ENCODE measurements at regions of chr3 and their contacts with region 1.

Region 1: DNA sequence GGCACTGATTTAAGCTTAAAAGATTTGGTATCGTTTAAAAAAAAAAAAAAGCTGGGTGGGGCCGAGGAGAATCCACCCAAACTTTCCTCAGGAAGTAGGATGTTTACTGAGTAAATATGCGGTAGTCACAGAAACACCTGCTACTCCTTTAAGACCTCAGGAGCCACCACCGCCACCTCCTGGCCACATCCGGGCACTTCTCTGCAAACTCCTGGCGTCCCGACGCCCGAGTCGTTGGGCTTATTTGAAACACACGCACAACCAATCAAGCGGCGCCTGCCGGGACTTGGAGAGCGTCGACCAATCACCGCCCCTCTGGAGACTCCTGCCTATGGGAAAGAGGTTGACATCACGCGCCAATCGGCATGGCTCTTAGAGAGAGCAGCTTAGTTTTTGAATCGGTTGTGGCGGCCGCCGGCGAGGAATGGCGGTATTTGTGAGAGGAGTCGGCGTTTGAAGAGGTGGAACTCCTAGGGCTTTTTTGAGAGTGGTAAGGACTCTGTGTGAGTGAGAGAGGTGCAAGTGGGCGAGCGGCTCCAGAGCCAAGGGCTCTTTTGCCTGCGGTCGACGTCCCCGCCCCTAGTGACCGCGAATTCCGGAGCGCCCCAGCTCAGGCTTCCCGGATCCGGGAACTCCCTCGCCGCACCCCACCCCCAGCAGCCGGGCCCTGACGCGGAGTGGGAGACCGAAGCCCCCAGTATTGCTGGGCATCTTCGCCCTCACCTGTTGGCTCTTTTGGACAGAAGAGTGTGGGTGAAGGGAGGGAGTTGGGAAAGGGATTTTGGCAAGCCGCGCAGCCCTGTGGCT is at the start of gene ECT2:
- DNase-seq: peak; percentile 100
- H3K4me3 Mint-ChIP-seq: peak within 1 kb of the TSS; percentile 99
- H3K27ac Mint-ChIP-seq: peak within 1 kb of the TSS; percentile 94
- H3K4me1 Mint-ChIP-seq: peaks cover 13% of the 10 kb centered on the region
- H3K27me3 Mint-ChIP-seq: no peaks in the 10 kb centered on the region
- total RNA-seq, gene ECT2: 55.3 to 59.4 TPM

Region 2: GRCh38 chr3:170869645-170870593 is 1880.7 kb before region 1 on chr3 and contains the start of gene RPL22L1:
- CTCF ChIA-PET with region 1: no interaction called
- intact Hi-C with region 1: loop called (anchors 1 kb)
- DNase-seq: peak; percentile 95
- H3K4me3 Mint-ChIP-seq: peak within 1 kb of the TSS; percentile 94
- H3K27ac Mint-ChIP-seq: peak within 1 kb of the TSS; percentile 98
- H3K4me1 Mint-ChIP-seq: peaks cover 14% of the 10 kb centered on the region
- H3K27me3 Mint-ChIP-seq: no peaks in the 10 kb centered on the region
- total RNA-seq, gene RPL22L1: 480 to 525 TPM

Region 3: GRCh38 chr3:172039436-172040077 is 711.0 kb before region 1 on chr3 and contains the start of gene FNDC3B:
- CTCF ChIA-PET with region 1: no interaction called
- intact Hi-C with region 1: loop called (anchors 1 kb)
- DNase-seq: peak; percentile 96
- H3K4me3 Mint-ChIP-seq: peak within 1 kb of the TSS; percentile 91
- H3K27ac Mint-ChIP-seq: peak within 1 kb of the TSS; percentile 89
- H3K4me1 Mint-ChIP-seq: peaks cover 21% of the 10 kb centered on the region
- H3K27me3 Mint-ChIP-seq: no peaks in the 10 kb centered on the region
- total RNA-seq, gene FNDC3B: 9.2 to 13.5 TPM

Region 4: GRCh38 chr3:172511783-172512762 is 238.5 kb before region 1 on chr3:
- CTCF ChIA-PET with region 1: interaction called, 3 read pairs
- intact Hi-C with region 1: loop called (anchors 2 kb)
- DNase-seq: peak; percentile 92
- H3K4me3 Mint-ChIP-seq: peak overlapping the region; percentile 68
- H3K27ac Mint-ChIP-seq: peak overlapping the region; percentile 93
- H3K4me1 Mint-ChIP-seq: peaks cover 82% of the 10 kb centered on the region
- H3K27me3 Mint-ChIP-seq: no peaks in the 10 kb centered on the region

Region 5: DNA sequence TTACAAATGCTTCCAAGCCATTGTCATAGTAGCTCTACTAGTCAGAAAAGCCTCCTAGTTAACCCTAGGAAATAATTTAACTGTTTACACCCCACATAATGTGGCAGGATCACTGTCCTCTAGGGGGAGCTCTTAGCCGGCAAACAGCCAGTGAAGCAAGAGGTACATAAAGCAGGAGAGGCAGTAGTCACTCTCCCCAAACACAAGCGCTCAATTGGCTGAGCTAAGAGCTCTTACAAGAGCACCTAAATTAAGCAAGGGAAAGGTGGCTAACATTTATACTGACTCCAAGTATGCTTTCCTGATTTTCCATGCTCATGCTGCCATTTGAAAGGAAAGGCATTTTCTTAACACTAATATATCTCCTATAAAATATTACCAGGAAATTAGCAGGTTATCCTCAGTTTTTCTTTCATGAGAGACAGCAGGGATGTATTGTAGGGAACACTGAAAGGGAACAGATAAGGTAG is 77.3 kb before region 1 on chr3:
- CTCF ChIA-PET with region 1: interaction called, 9 read pairs
- intact Hi-C with region 1: loop called (anchors 1 kb)
- DNase-seq: peak; percentile 89
- H3K4me3 Mint-ChIP-seq: no peak overlapping the region
- H3K27ac Mint-ChIP-seq: no peak overlapping the region
- H3K4me1 Mint-ChIP-seq: no peaks in the 10 kb centered on the region
- H3K27me3 Mint-ChIP-seq: no peaks in the 10 kb centered on the region

Region 6: DNA sequence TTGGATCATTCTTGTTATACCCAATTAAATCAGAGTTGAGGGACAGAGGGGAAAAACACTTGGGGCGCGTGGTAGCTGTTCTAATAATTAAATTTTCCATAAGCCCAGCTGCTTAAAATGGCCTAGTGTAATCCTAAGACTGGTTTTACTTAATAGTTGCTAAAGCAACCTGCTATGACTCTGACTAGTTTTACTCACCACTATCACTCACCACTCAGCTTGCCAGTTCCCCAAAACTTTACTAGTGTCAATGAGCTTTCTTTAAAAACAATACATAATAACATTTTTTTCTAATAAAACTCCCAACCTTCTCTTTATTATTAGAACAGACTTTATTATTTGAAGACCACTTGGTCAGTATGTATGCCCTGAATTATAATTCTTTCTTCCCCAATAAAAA is 49.6 kb after region 1 on chr3:
- CTCF ChIA-PET with region 1: no interaction called
- intact Hi-C with region 1: loop called (anchors 5 kb)
- DNase-seq: no peak
- H3K4me3 Mint-ChIP-seq: no peak overlapping the region
- H3K27ac Mint-ChIP-seq: no peak overlapping the region
- H3K4me1 Mint-ChIP-seq: peaks cover 7% of the 10 kb centered on the region
- H3K27me3 Mint-ChIP-seq: no peaks in the 10 kb centered on the region

Region 7: DNA sequence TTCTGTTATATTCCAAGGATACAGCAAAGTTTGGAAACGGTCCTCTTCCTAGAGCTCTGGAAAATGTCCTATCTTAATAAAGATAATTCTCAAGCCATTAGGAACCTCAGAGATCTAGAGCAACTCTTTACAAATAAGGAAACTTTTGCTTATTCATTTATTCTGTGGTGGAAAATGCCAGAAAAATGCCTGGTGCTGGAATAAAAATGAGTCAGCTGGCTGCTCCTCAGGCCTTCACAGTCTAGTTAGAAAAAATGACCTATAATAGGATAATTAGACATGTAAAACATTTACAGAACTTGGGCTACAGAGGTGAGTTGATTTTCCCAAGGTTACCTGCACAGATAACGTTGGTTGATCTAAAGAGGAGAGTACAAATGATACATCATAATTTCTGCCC is 1019.4 kb after region 1 on chr3:
- CTCF ChIA-PET with region 1: no interaction called
- intact Hi-C with region 1: no loop called
- DNase-seq: no peak
- H3K4me3 Mint-ChIP-seq: no peak overlapping the region
- H3K27ac Mint-ChIP-seq: no peak overlapping the region
- H3K4me1 Mint-ChIP-seq: no peaks in the 10 kb centered on the region
- H3K27me3 Mint-ChIP-seq: no peaks in the 10 kb centered on the region